ENCODE measurements at regions of chr2 and their contacts with region 1.

Region 1: GRCh38 chr2:237413777-237414661 is at the start of gene COL6A3:
- DNase-seq: peak; percentile 73 to 82 (median 79)
- ATAC-seq: peak; percentile 58 to 83 (median 74)
- H3K4me3 ChIP-seq: peak within 1 kb of the TSS; percentile 26 to 71 (median 56)
- H3K27ac ChIP-seq: peak within 1 kb of the TSS; percentile 26 to 91 (median 78)
- H3K4me1 ChIP-seq: peaks cover 0 to 16% (median 0%) of the 10 kb centered on the region in 12 donors
- H3K27me3 ChIP-seq: peaks cover 0 to 7% (median 0%) of the 10 kb centered on the region in 9 donors
- CTCF ChIP-seq: no peak
- POLR2A ChIP-seq: no peak
- total RNA-seq, gene COL6A3: 41.3 to 290 (median 87.3) TPM

Region 2: DNA sequence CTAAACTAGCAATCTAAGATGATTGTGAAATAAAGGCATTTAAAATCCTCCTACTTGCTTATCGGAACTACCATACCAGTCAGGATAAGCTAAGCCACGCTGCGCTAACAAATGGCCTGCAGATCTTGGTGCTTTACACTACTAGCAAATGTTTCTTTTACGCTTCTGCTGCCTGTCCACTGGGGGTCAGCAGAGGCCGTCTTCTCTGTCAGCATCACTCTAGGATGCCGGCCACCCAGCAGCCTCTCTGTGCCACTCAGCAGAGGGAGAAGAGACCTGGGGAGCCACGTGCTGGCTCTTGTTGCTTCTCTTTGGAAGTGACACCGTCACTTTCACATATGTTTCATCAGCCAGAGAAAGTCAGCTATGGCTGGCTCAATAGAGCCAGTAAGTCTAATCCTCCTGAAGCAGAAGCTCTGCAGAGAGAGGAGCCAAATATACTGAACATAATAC is 291.8 kb before region 1 on chr2:
- intact Hi-C with region 1: loop called in 4 of 10 experiments (anchors 2 to 10 kb)
- DNase-seq: peak; percentile 55 to 83 (median 64)
- ATAC-seq: peak in 3 of 4 donors; percentile 76 to 92 (median 85)
- H3K4me3 ChIP-seq: no peak overlapping the region
- H3K27ac ChIP-seq: no peak overlapping the region
- H3K4me1 ChIP-seq: peaks cover 0 to 13% (median 0%) of the 10 kb centered on the region in 12 donors
- H3K27me3 ChIP-seq: no peaks in the 10 kb centered on the region
- CTCF ChIP-seq: peak; percentile 47 to 78 (median 68)
- POLR2A ChIP-seq: no peak

Region 3: DNA sequence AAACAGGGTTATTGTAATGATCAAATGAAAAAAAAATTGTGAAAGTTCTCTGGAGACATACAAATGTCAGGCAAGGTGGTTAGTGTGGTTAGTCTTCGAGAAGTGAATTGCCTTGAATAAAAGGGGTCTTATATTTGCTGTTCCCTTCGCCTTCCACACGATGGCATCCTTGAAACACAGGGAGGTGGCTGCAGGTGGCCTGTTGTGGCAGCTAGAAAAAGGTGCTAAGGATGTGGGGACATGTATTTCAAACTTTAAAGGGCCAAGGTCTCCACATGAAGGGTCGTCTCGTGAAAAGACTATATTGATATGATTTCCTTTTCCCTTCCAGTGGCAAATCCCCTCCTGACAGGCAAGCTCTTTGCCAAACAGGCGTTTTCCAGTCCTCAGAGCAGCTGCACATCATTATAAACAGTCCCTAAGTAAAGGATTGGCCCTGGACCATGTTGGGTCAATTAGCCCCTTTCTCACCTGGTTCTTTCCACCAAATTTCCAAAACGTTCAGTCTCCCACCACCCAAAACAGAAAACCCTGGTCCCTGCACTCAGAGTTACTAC is 259.9 kb before region 1 on chr2:
- intact Hi-C with region 1: loop called in 6 of 10 experiments (anchors 5 to 10 kb)
- DNase-seq: peak in 1 of 5 donors; percentile 45
- ATAC-seq: peak in 1 of 4 donors; percentile 22
- H3K4me3 ChIP-seq: no peak overlapping the region
- H3K27ac ChIP-seq: peak overlapping the region in 3 of 12 donors; percentile 55 to 77 (median 76)
- H3K4me1 ChIP-seq: peaks cover 0 to 33% (median 3%) of the 10 kb centered on the region in 12 donors
- H3K27me3 ChIP-seq: no peaks in the 10 kb centered on the region
- CTCF ChIP-seq: peak; percentile 44 to 68 (median 58)
- POLR2A ChIP-seq: no peak

Region 4: DNA sequence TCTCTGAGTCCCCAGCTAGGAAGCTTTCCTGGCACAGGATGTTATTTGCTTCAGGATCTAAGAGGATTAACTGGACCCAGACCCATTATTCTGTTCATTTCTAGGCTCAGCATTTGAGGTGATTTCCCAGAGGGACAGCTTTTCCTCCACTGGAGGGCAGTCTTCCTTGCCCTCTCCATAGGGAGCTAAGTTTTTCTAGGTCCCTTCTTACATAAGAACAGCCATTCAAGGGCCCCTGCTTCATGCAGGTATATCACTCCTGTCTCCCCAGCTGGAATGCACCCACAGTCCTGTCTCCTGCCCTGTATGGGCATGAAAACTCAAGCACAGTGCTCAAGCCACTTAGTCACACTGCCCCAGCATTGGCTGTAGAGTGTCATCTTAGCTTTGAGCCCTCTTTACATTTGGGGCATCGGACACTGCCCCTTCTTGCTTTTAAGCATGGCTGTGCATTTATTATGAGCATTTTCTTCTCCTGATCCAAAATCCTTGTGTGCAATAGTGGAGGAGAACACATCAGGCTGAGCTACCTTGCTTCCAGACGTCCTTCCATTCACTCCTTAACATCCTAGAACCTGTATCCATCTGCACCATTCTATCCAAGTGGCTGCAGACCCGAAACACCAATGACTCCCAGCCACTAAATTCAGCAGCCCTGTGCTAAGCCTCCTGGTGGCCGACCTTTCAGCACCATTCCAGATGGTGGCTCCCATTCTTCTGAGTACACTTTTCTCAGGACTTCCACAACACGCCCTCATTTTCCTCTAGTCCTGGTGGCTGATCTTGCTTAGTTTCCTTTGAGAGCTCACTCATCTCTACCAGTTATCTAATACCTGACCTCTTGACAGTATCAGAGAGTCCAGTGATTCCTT is 248.4 kb before region 1 on chr2:
- intact Hi-C with region 1: loop called in 6 of 10 experiments (anchors 2 to 5 kb)
- DNase-seq: no peak
- ATAC-seq: peak in 1 of 4 donors; percentile 39
- H3K4me3 ChIP-seq: no peak overlapping the region
- H3K27ac ChIP-seq: peak overlapping the region in 7 of 12 donors; percentile 5 to 58 (median 51)
- H3K4me1 ChIP-seq: peaks cover 0 to 8% (median under 1%) of the 10 kb centered on the region in 12 donors
- H3K27me3 ChIP-seq: no peaks in the 10 kb centered on the region
- CTCF ChIP-seq: peak; percentile 25 to 63 (median 47)
- POLR2A ChIP-seq: no peak

Region 5: GRCh38 chr2:237171396-237171795 is 242.6 kb before region 1 on chr2:
- intact Hi-C with region 1: loop called in 4 of 10 experiments (anchors 5 kb)
- DNase-seq: peak in 1 of 5 donors; percentile 38
- ATAC-seq: peak; percentile 42 to 91 (median 82)
- H3K4me3 ChIP-seq: no peak overlapping the region
- H3K27ac ChIP-seq: peak overlapping the region in 11 of 12 donors; percentile 13 to 71 (median 59)
- H3K4me1 ChIP-seq: peaks cover 0 to 16% (median 0%) of the 10 kb centered on the region in 12 donors
- H3K27me3 ChIP-seq: no peaks in the 10 kb centered on the region
- CTCF ChIP-seq: peak in 5 of 12 donors; percentile 10 to 51 (median 26)
- POLR2A ChIP-seq: no peak

Region 6: DNA sequence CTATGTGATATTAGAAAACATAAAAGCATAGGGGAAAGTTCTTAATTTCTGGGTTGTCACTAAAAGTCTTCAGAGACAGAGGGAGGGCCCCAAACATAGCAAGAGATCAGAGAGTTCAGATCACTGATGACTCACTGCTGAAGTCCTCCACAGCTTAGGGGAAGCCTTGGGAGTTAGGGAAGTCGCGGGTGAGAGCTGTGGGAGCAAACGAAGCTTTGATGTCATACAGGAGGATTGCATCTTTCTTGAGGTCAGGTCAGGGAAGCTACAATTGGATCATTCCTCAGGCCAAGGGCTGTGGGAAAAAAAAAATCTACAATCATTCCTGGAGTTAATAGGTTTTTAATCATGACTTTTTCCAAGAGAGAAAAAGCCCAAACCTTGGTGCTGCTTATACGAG is 232.2 kb before region 1 on chr2:
- intact Hi-C with region 1: no loop called
- DNase-seq: no peak
- ATAC-seq: peak in 3 of 4 donors; percentile 61 to 83 (median 65)
- H3K4me3 ChIP-seq: no peak overlapping the region
- H3K27ac ChIP-seq: peak overlapping the region in 5 of 12 donors; percentile 18 to 52 (median 30)
- H3K4me1 ChIP-seq: peaks cover 0 to 18% (median 0%) of the 10 kb centered on the region in 12 donors
- H3K27me3 ChIP-seq: no peaks in the 10 kb centered on the region
- CTCF ChIP-seq: no peak
- POLR2A ChIP-seq: no peak